ENCODE measurements at regions of chr16 and their contacts with region 1.

Region 1: GRCh38 chr16:4846891-4847773 is at the starts of genes GLYR1 and UBN1:
- H3K4me3 Mint-ChIP-seq: peak within 1 kb of the TSS; percentile 99
- H3K27ac Mint-ChIP-seq: peak within 1 kb of the TSS; percentile 95
- H3K4me1 Mint-ChIP-seq: peaks cover 45% of the 10 kb centered on the region
- H3K27me3 Mint-ChIP-seq: no peaks in the 10 kb centered on the region

Region 2: GRCh38 chr16:4766874-4767628 is 80.1 kb before region 1 on chr16 and contains the start of gene ZNF500:
- intact Hi-C with region 1: loop called (anchors 1 kb)
- H3K4me3 Mint-ChIP-seq: peak within 1 kb of the TSS; percentile 89
- H3K27ac Mint-ChIP-seq: peak within 1 kb of the TSS; percentile 90
- H3K4me1 Mint-ChIP-seq: peaks cover 53% of the 10 kb centered on the region
- H3K27me3 Mint-ChIP-seq: no peaks in the 10 kb centered on the region

Region 3: GRCh38 chr16:4802659-4803287 is 44.4 kb before region 1 on chr16:
- intact Hi-C with region 1: loop called (anchors 5 kb)
- H3K4me3 Mint-ChIP-seq: peak overlapping the region; percentile 92
- H3K27ac Mint-ChIP-seq: peak overlapping the region; percentile 97
- H3K4me1 Mint-ChIP-seq: peaks cover 63% of the 10 kb centered on the region
- H3K27me3 Mint-ChIP-seq: no peaks in the 10 kb centered on the region

Region 4: GRCh38 chr16:4957720-4958509 is 110.8 kb after region 1 on chr16 and contains the start of gene SEC14L5:
- intact Hi-C with region 1: loop called (anchors 2 kb)
- H3K4me3 Mint-ChIP-seq: peak within 1 kb of the TSS; percentile 87
- H3K27ac Mint-ChIP-seq: peak within 1 kb of the TSS; percentile 77
- H3K4me1 Mint-ChIP-seq: peaks cover 27% of the 10 kb centered on the region
- H3K27me3 Mint-ChIP-seq: peaks cover 64% of the 10 kb centered on the region

Region 5: GRCh38 chr16:5071681-5072333 is 224.7 kb after region 1 on chr16 and contains the start of gene ALG1:
- intact Hi-C with region 1: loop called (anchors 10 kb)
- H3K4me3 Mint-ChIP-seq: peak within 1 kb of the TSS; percentile 90
- H3K27ac Mint-ChIP-seq: peak within 1 kb of the TSS; percentile 92
- H3K4me1 Mint-ChIP-seq: peaks cover 24% of the 10 kb centered on the region
- H3K27me3 Mint-ChIP-seq: peaks cover 5% of the 10 kb centered on the region

Measured in dendritic cell treated with granulocyte-macrophage colony-stimulating factor and Interleukin-4, amounts not matched to agents 40 ng/mL and 50 ng/mL, for 4 days (primary cell).